Activated CD4-positive, alpha-beta T cell treated with anti-CD3 and anti-CD28 coated beads for 36 hours (primary cell): ENCODE measurements at regions of chr20 and their contacts with region 1.

Region 1: DNA sequence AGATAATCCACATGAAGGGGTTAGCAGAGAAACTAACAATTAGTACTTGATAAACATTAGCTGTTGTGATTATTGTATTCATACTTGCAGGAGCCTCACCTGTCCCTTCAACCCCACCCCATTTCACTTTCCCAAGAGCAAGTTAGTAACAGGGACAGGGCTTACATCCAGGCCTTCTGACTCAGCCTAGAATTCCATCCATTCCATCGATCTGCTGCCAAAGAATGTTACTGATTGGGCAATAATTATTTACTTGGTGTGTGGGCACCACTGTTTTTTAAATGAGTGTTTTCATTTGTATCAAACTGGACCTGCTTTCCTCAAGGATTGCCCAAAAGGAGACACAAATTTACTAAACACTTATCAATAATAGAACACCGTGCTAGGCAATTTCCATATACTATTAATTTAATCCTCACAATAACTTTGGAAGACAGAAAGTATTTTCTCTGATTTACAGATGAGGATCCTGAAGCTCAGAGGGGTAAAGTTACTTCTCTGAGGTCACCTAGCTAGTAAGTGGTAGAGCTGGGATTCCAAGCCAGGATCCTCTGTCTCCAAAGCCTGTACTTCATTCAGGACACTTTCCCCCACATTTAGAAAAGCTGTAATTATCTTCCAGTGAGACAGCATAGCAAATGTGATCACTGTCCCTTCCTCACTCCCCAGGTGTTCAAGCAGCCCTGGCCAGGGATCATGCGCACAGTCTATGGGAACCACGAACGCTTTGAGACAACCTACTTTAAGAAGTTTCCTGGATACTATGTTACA is 32.8 kb downstream of the GSS start:
- DNase-seq: no peak
- ATAC-seq: no peak
- H3K4me3 Mint-ChIP-seq: no peak overlapping the region
- H3K27ac Mint-ChIP-seq: no peak overlapping the region
- H3K4me1 Mint-ChIP-seq: peaks cover 30% of the 10 kb centered on the region
- H3K27me3 Mint-ChIP-seq: no peaks in the 10 kb centered on the region

Region 2: DNA sequence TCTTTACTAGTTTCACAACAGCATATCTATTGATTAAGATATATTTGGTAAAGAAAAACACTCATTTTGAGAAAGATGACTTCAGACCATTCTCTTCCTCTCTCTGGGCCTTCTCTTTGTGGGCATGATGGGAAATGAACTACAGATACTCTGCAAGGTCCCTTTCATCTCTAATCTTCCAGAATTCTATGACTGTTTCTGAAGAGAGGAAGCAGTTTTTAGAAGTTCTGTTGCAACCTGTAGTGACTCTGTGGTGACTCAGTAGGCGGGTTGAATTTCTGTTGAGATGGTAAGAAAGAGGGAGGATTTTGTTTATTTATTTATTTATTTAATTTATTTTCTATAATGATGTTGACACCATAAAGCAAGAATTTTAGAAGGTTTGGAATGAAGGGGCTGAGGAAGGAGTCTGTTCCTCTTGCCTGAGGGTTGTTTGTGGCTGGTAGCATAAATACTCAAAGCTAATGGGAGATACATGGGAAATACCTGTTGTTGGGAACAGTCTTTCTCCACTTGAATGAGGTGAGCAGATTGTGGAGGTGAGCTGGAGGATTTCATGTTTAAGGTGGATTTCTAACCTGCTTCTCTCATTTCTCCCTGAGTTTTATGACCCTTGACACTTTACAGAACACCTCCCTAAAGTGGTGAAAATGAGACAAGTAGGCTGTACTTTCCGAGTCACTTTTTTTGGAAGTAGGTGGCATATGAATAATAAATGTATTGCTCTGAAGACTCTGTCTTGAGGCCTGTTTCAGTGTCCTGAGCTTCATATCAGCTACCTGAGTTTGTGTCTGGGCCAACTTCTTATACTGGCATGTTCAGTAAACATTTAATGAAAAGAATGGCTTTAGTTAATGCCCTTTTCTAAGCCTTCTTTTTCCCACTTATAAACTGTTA is 31.4 kb before region 1 on chr20:
- CTCF ChIA-PET with region 1: no interaction called
- POLR2A ChIA-PET with region 1: no interaction called
- intact Hi-C with region 1: loop called (anchors 1 kb)
- DNase-seq: peak; percentile 64
- ATAC-seq: peak; percentile 97
- H3K4me3 Mint-ChIP-seq: peak overlapping the region; percentile 16
- H3K27ac Mint-ChIP-seq: peak overlapping the region; percentile 78
- H3K4me1 Mint-ChIP-seq: peaks cover 42% of the 10 kb centered on the region
- H3K27me3 Mint-ChIP-seq: no peaks in the 10 kb centered on the region